ENCODE measurements at regions of chr6 and their contacts with region 1.

Region 1: DNA sequence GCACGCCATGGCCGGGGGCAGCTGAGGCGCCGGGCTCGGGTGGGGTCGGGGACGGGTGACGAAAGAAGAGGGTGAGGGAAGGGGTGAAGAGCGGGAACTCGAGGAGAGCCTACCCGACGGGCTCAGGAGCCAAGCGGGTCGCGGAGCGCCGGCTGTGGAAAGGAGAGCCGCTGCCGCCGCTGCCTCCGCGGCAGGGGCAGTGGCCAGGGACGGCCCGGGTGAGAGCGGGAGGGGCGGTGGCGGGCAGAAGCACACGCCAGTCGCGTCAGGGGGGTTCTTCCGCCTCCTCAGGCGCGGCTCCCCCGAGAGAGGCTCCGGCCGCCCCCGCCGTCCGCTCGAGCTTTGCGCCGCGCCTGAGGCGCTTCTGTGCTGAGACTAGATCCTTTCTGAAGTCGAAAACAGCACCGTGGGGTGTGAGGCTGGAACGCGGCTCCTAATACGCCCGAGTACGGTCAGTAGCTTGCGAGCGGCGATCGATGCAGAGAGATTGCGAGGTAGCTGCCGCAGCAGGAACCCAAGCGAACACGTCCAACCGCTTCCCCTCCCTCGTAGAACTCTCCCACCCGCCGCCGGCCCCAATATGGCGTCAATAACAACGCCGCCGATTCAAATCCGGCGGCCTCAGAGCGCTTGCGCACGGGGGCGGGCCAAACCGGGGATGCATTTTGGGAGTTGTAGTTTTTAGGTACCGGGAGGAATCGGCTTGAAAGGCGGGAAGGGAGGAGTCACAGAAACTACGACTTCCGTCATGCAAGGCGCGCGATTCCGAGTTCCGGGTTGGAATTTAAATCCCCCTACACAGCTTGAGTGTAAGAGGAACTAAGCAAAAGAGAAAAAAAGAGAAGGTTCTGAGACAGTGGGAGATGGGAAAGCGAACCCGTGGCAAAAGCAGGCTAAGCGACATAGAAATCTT is at the start of gene AKIRIN2:
- DNase-seq: peak; percentile 98
- H3K4me3 Mint-ChIP-seq: peak within 1 kb of the TSS; percentile 83
- H3K27ac Mint-ChIP-seq: peak within 1 kb of the TSS; percentile 89
- H3K4me1 Mint-ChIP-seq: peaks cover 17% of the 10 kb centered on the region
- H3K27me3 Mint-ChIP-seq: no peaks in the 10 kb centered on the region
- CTCF ChIP-seq: no peak
- total RNA-seq, gene AKIRIN2: 47.6 and 48.1 TPM in 2 replicates

Region 2: DNA sequence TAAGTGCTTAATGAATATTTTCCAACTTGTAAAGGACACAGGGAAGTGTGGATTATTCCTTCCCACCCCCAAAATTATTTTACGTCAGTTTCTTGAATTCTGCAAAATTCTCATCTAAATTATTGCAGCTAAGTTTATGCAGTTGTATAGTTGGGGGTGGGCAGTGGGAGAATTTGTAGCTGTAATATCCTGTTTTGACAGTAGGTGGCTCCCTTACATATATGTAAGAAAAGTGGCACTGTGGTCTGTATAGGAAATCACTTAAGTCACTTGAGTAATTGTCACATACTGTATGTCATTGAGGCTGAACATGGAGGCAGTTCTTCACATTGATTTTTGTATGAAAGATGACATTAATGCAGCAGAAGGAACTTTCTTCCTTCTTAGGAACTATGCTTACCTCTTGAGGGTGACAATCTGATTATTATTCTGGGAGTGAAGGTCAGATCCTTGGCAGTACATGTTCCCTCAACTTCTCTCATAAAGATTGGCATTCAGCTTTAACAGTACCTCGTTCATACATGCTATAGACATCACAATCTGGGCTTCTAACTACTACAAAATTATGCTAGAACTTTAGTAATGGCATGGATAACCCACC is 308.8 kb before region 1 on chr6:
- CTCF ChIA-PET with region 1: interaction called, 3 read pairs
- POLR2A ChIA-PET with region 1: interaction called, 4 read pairs
- intact Hi-C with region 1: loop called (anchors 10 kb)
- DNase-seq: peak; percentile 58
- H3K4me3 Mint-ChIP-seq: no peak overlapping the region
- H3K27ac Mint-ChIP-seq: no peak overlapping the region
- H3K4me1 Mint-ChIP-seq: no peaks in the 10 kb centered on the region
- H3K27me3 Mint-ChIP-seq: no peaks in the 10 kb centered on the region
- CTCF ChIP-seq: peak; percentile 71

Region 3: DNA sequence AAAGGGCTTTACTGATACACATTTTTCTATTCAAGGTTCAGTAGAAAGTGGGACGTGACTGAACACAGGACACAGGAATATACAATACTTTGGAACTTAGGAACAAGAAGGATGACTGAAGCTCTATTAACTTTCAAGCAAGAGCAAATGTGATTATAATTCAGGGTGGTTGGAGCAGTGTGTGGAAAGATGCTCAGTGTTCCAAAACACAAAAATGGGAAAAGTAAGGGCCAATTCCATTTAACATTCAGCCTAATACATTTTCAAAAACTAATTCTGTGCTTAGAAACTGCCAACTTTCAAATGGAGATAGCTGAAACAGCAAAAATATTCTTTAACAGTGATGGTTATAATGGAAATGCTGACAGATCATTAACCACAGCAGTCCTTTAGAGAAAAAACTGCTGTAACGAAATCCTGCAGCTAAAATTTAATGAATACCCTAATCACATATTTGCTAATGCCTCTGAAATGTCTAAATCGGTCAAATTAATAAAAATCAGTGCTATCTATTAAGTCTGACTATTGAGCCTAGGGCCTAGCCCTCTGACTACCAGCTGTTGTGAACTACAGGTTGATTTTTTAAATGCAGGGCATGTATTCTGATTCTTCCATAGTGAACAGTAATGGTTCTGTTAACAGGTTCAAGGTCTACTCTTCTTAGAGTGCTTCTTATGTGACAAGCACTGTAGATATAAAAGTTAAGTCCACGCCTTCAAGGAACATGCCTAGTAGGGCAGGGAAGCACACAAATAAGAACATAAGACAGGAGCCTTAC is 158.0 kb before region 1 on chr6:
- CTCF ChIA-PET with region 1: no interaction called
- POLR2A ChIA-PET with region 1: no interaction called
- intact Hi-C with region 1: no loop called
- DNase-seq: no peak
- H3K4me3 Mint-ChIP-seq: no peak overlapping the region
- H3K27ac Mint-ChIP-seq: no peak overlapping the region
- H3K4me1 Mint-ChIP-seq: no peaks in the 10 kb centered on the region
- H3K27me3 Mint-ChIP-seq: no peaks in the 10 kb centered on the region
- CTCF ChIP-seq: no peak

Region 4: DNA sequence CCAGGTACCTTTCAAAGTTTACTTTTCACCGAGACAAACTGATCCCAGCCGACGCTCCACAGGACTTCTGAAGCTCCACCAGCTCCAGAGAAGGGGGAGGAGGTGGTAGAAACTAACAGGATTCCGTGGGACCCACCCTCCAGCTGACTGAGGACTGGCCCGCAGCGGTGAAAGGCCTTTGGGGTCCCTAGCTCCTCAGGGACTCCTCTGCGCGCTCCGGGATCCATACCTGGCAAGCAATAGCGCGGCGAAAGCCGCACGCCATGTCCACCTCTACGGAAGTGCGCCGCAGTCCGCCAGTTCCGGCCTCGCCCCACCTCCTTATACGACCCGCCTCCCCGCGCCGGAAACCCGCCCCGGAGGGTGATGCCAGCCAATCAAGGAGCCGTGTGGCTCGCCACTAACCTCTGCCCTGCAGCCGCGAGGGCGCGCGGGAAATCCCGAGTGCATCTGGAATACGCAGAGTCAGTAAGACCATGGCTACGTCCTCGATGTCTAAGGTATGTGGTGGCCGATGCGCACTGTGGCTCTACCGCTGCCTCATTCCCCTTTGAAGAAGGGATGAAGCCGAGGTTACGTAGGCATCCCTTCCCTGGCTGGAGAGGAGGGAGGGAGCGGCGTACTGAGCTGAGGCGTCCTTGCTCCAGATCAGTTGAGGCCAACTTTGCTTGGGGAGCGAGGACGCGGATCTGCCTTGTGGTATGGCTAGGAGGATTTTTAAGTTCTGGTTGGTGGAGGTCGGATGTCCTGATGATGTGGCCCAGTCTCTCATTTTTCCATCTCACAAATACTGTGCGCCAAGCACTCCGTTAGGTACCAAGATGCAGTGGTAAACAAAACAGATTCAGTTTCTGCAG is 112.0 kb before region 1 on chr6 and contains the starts of genes ORC3 and RARS2:
- CTCF ChIA-PET with region 1: interaction called, 4 read pairs
- POLR2A ChIA-PET with region 1: interaction called, 35 read pairs
- intact Hi-C with region 1: no loop called
- DNase-seq: peak; percentile 96
- H3K4me3 Mint-ChIP-seq: peak within 1 kb of the TSS; percentile 94
- H3K27ac Mint-ChIP-seq: peak within 1 kb of the TSS; percentile 77
- H3K4me1 Mint-ChIP-seq: peaks cover 43% of the 10 kb centered on the region
- H3K27me3 Mint-ChIP-seq: no peaks in the 10 kb centered on the region
- CTCF ChIP-seq: no peak
- total RNA-seq, gene ORC3: 19.4 and 21.1 TPM in 2 replicates
- total RNA-seq, gene RARS2: 29.9 and 31.0 TPM in 2 replicates

Region 5: DNA sequence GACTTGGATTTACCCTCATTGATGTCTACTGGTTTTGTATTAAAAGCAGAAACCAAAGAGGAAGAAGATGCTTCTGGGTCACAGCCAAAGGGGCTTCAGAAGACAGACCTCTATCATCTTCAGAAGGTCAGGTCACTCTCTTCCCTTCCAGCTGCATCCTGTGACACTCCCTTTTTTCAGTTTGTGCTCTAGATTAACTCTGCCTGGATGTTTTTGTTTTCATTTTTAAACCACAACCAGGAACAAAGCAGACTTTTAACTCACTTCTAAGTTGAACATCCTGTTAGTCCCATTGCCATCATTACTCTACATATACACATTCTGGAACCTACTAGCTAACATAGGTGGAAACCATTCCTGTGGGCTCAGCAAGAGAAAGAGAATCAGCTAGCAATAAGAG is 45.1 kb before region 1 on chr6:
- CTCF ChIA-PET with region 1: no interaction called
- POLR2A ChIA-PET with region 1: no interaction called
- intact Hi-C with region 1: no loop called
- DNase-seq: no peak
- H3K4me3 Mint-ChIP-seq: no peak overlapping the region
- H3K27ac Mint-ChIP-seq: no peak overlapping the region
- H3K4me1 Mint-ChIP-seq: no peaks in the 10 kb centered on the region
- H3K27me3 Mint-ChIP-seq: no peaks in the 10 kb centered on the region
- CTCF ChIP-seq: no peak

Region 6: GRCh38 chr6:87723170-87724078 is 21.5 kb after region 1 on chr6:
- CTCF ChIA-PET with region 1: interaction called, 5 read pairs
- POLR2A ChIA-PET with region 1: interaction called, 89 read pairs
- intact Hi-C with region 1: loop called (anchors 2 kb)
- DNase-seq: peak; percentile 98
- H3K4me3 Mint-ChIP-seq: peak overlapping the region; percentile 15
- H3K27ac Mint-ChIP-seq: no peak overlapping the region
- H3K4me1 Mint-ChIP-seq: peaks cover 21% of the 10 kb centered on the region
- H3K27me3 Mint-ChIP-seq: no peaks in the 10 kb centered on the region
- CTCF ChIP-seq: no peak

Region 7: DNA sequence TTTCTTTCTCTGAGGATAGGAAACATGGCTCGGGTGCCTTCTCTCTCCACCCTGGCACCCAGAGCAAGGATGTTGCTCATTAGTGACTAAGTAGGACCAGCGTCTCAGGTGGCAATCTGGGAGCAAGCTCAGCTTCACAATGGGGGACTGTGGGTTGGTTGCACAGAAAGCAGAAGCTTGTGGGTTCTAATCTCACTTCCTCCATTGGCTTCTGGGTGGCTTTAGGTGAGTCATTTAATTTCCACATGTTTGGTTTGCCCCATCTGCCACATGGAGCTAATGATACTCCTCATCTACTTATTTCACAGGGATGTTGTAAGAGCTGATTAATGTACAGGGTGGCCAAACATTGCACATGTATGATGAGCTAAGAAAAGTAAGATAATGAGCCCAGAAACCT is 54.9 kb after region 1 on chr6:
- CTCF ChIA-PET with region 1: interaction called, 3 read pairs
- POLR2A ChIA-PET with region 1: interaction called, 3 read pairs
- intact Hi-C with region 1: loop called (anchors 2 kb)
- DNase-seq: peak; percentile 73
- H3K4me3 Mint-ChIP-seq: no peak overlapping the region
- H3K27ac Mint-ChIP-seq: no peak overlapping the region
- H3K4me1 Mint-ChIP-seq: peaks cover 6% of the 10 kb centered on the region
- H3K27me3 Mint-ChIP-seq: no peaks in the 10 kb centered on the region
- CTCF ChIP-seq: no peak

Region 8: GRCh38 chr6:87799651-87800050 is 97.7 kb after region 1 on chr6:
- CTCF ChIA-PET with region 1: no interaction called
- POLR2A ChIA-PET with region 1: interaction called, 10 read pairs
- intact Hi-C with region 1: no loop called
- DNase-seq: no peak
- H3K4me3 Mint-ChIP-seq: no peak overlapping the region
- H3K27ac Mint-ChIP-seq: no peak overlapping the region
- H3K4me1 Mint-ChIP-seq: peaks cover 18% of the 10 kb centered on the region
- H3K27me3 Mint-ChIP-seq: no peaks in the 10 kb centered on the region
- CTCF ChIP-seq: no peak

Region 9: GRCh38 chr6:88045521-88046136 is 343.7 kb after region 1 on chr6:
- CTCF ChIA-PET with region 1: no interaction called
- POLR2A ChIA-PET with region 1: no interaction called
- intact Hi-C with region 1: no loop called
- DNase-seq: no peak
- H3K4me3 Mint-ChIP-seq: no peak overlapping the region
- H3K27ac Mint-ChIP-seq: no peak overlapping the region
- H3K4me1 Mint-ChIP-seq: peaks cover 6% of the 10 kb centered on the region
- H3K27me3 Mint-ChIP-seq: no peaks in the 10 kb centered on the region
- CTCF ChIP-seq: no peak

Region 10: DNA sequence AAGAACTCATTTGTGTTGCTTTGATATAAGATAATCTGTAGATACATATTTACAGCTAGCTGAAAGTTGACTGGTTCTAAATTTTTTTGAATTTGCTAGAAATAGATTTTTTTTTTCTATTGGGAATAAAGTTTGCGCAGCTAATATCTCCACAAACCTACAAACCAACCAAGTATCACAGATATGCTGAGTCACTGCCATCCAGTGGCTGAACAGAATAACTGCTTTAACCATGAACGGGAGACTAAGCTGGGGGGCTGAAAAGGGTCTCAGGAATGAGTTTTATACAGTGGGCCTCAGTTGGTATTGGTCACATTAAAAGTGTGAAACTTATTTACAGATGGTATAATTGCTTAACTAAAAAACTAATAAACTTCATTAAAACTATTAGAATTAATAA is 790.9 kb after region 1 on chr6:
- CTCF ChIA-PET with region 1: no interaction called
- POLR2A ChIA-PET with region 1: no interaction called
- intact Hi-C with region 1: loop called (anchors 5 kb)
- DNase-seq: peak; percentile 46
- H3K4me3 Mint-ChIP-seq: no peak overlapping the region
- H3K27ac Mint-ChIP-seq: no peak overlapping the region
- H3K4me1 Mint-ChIP-seq: peaks cover 23% of the 10 kb centered on the region
- H3K27me3 Mint-ChIP-seq: no peaks in the 10 kb centered on the region
- CTCF ChIP-seq: peak; percentile 64

Measured in MCF 10A (cell line).